HEK293 (cell line): ENCODE measurements at regions of chr6 and their contacts with region 1.

Region 1: GRCh38 chr6:106608062-106608668 is 21.1 kb downstream of the RTN4IP1 start:
- H3K4me3 ChIP-seq: no peak overlapping the region
- H3K27ac ChIP-seq: no peak overlapping the region
- H3K4me1 ChIP-seq: peaks cover 6% of the 10 kb centered on the region; the same call in 1 of the 2 replicates
- CTCF ChIP-seq: no peak

Region 2: DNA sequence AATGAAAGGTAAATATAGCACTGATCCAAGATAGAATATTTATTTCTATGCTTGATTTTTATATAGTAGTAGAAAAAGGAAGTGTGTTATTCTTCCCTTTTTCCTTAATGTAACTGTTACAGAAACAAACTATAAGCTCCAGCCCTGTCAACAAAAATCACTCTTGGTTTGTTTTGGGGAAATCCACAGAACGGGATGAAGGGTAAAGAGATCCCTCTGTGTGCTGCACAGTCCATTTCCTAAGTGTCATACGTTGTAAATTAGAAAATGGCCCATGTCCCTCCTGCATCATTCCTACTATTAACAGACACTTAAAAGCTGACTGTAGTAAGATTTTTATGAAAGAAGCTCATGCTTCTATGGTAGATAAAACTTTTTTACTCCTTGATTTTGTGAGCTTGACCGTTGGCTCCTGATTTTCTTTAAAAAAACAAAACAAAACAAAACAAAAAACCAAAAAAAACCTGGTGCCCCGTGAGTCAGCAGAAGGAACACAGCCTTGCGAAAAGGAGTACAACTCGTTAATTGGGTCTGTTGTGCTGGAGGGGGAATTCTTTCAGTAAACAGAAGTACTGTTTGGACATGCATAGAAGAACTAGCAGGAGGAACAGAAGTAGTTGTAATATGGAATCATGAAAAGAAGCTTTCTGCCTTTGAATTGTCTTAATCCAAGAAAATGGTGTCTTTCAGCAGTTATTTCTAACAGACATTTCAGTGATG is 46.3 kb before region 1 on chr6:
- CTCF ChIA-PET with region 1: interaction called, 10 read pairs
- POLR2A ChIA-PET with region 1: no interaction called
- H3K4me3 ChIP-seq: no peak overlapping the region
- H3K27ac ChIP-seq: no peak overlapping the region
- H3K4me1 ChIP-seq: no peaks in the 10 kb centered on the region
- CTCF ChIP-seq: no peak

Region 3: GRCh38 chr6:106618324-106618723 is 10.2 kb after region 1 on chr6:
- CTCF ChIA-PET with region 1: interaction called, 17 read pairs
- POLR2A ChIA-PET with region 1: no interaction called
- H3K4me3 ChIP-seq: no peak overlapping the region
- H3K27ac ChIP-seq: no peak overlapping the region
- H3K4me1 ChIP-seq: peaks cover 7% of the 10 kb centered on the region; the same call in 1 of the 2 replicates
- CTCF ChIP-seq: no peak